Ovary (tissue), 10 donors: ENCODE measurements at regions of chr6 and their contacts with region 1.

Region 1: DNA sequence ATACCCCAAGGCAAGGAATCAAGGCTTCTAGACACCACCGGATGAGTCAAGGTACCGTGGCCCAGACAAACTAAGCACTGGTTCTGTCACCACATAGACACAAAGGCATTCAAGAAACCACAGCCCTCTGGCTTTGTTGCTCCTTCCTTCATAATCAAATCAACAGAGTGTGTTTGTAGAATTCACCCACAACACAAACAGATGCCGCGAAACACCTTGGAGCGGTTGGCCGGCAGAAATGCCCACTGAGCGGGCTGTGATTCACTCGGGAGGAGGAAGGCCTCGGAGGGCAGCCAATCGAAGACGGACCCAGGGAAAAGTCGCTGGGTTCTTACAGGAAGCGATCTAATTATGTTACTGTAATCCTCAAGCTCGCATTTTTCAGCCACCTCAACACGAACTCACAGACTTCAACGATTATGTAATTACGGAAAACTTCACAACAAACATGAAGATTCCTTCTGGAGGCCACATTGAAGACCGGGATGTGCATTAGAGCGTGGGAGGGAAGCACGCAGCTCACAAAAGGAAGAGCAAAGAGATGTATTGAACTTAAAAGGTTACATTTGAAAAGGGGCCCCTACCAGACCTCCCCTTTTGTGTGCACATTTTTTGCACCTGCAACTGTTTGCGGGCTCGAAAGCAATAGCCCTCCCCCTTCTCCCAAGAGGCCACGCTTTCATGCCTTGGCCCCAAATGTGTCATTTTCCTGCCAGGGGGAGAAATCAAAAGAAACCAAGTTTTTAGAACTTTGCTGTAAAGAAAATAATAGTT is 184.7 kb upstream of the PREP start:
- DNase-seq: no peak
- H3K4me3 ChIP-seq: no peak overlapping the region
- H3K27ac ChIP-seq: no peak overlapping the region
- H3K4me1 ChIP-seq: no peaks in the 10 kb centered on the region
- H3K27me3 ChIP-seq: no peaks in the 10 kb centered on the region
- CTCF ChIP-seq: no peak
- EP300 ChIP-seq: no peak
- POLR2A ChIP-seq: no peak

Region 2: GRCh38 chr6:105560611-105561066 is 26.9 kb before region 1 on chr6:
- intact Hi-C with region 1: loop called in 1 of 4 experiments (anchors 1 kb)
- DNase-seq: no peak
- H3K4me3 ChIP-seq: no peak overlapping the region
- H3K27ac ChIP-seq: no peak overlapping the region
- H3K4me1 ChIP-seq: no peaks in the 10 kb centered on the region
- H3K27me3 ChIP-seq: no peaks in the 10 kb centered on the region
- CTCF ChIP-seq: no peak
- EP300 ChIP-seq: no peak
- POLR2A ChIP-seq: no peak